ENCODE measurements at regions of chr1 and their contacts with region 1.

Region 1: DNA sequence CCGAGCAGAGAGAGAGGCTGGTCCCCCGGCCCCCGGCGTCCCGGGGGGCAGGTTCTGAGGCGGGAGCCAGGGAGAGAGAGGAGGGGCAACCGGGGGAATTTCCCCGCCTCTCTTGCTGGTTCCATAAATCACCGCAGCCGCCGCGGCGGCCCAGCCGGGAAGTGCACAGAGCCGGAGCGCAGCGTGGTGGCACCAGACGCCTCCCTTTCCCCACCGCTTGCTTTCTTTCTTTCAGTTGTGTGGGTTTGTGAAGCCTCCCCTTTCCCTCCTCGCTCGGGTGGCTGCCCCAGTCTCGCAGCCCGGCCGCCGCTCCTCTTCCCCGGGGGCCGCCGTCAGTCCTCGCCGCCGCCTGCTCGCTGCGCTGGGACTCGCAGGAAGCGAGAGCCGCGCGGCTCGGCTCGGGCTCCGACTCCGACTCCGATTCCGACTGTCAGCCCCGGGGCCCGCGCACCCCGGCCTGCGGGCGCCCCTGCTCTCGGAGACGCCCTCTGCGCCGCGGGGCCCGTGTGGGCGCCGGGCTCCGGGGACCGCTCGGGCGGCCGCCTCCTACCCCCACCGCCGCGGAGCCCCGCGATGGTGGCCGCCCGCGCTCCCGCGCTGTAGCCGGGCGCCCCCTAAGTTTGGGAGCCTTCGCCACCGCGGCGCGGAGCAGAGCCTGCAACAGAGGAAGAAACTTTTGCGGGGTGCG is at the start of gene CACHD1:
- DNase-seq: peak; percentile 32 to 59
- ATAC-seq: peak; percentile 74 to 80
- H3K4me3 ChIP-seq: peak within 1 kb of the TSS; percentile 65 to 85 (median 76)
- H3K27ac ChIP-seq: peak within 1 kb of the TSS; percentile 65 to 78 (median 77)
- H3K4me1 ChIP-seq: peaks cover 8 to 16% of the 10 kb centered on the region in 2 donors
- H3K27me3 ChIP-seq: no peaks in the 10 kb centered on the region
- CTCF ChIP-seq: peak; percentile 21 to 56 (median 32)
- POLR2A ChIP-seq: peak in 1 of 2 donors; percentile 31
- total RNA-seq, gene CACHD1: 2.2 to 3.6 (median 2.9) TPM

Region 2: GRCh38 chr1:64663668-64664067 is 193.5 kb after region 1 on chr1:
- in situ Hi-C with region 1: loop called in 2 of 4 experiments (anchors 25 kb)
- intact Hi-C with region 1: no loop called
- DNase-seq: no peak
- ATAC-seq: no peak
- H3K4me3 ChIP-seq: no peak overlapping the region
- H3K27ac ChIP-seq: no peak overlapping the region
- H3K4me1 ChIP-seq: no peaks in the 10 kb centered on the region
- H3K27me3 ChIP-seq: no peaks in the 10 kb centered on the region
- CTCF ChIP-seq: no peak
- POLR2A ChIP-seq: no peak